ENCODE measurements at regions of chr9 and their contacts with region 1.

Region 1: GRCh38 chr9:32968101-32969011 is 33.1 kb downstream of the APTX start:
- DNase-seq: peak; percentile 10
- ATAC-seq: peak; percentile 64; the same call in 1 of the 2 replicates
- H3K4me3 ChIP-seq: no peak overlapping the region
- H3K27ac ChIP-seq: no peak overlapping the region
- H3K4me1 ChIP-seq: no peaks in the 10 kb centered on the region
- H3K27me3 ChIP-seq: no peaks in the 10 kb centered on the region
- CTCF ChIP-seq: peak; percentile 81; the same call in 1 of the 2 replicates

Region 2: DNA sequence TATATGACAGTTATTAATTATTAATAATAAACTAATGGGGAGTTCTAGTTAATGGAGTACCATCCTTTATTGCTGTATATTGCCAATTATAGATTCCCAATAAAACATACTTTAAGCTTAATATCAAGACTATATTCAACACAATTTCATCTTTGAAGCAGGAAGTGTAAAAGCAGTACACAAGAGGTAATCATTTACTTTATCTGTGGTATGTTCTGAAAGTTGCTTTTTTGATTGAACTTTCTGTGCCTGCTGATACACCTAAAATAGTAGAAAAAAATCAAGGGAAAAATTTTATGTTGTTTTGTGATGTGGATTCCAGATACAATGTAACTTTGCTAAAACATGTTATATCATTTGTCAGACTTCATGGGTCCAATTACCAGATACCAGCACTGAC is 525.9 kb before region 1 on chr9:
- CTCF ChIA-PET with region 1: no interaction called
- POLR2A ChIA-PET with region 1: no interaction called
- in situ Hi-C with region 1: no loop called
- intact Hi-C with region 1: no loop called
- DNase-seq: no peak
- ATAC-seq: no peak
- H3K4me3 ChIP-seq: no peak overlapping the region
- H3K27ac ChIP-seq: no peak overlapping the region
- H3K4me1 ChIP-seq: no peaks in the 10 kb centered on the region
- H3K27me3 ChIP-seq: no peaks in the 10 kb centered on the region
- CTCF ChIP-seq: no peak

Region 3: GRCh38 chr9:32550562-32551433 is 417.6 kb before region 1 on chr9:
- CTCF ChIA-PET with region 1: no interaction called
- POLR2A ChIA-PET with region 1: no interaction called
- in situ Hi-C with region 1: loop called (anchors 25 kb)
- intact Hi-C with region 1: no loop called
- DNase-seq: peak; percentile 52
- ATAC-seq: peak; percentile 82
- H3K4me3 ChIP-seq: peak overlapping the region; percentile 54 to 78
- H3K27ac ChIP-seq: peak overlapping the region; percentile 84
- H3K4me1 ChIP-seq: peaks cover 16% of the 10 kb centered on the region
- H3K27me3 ChIP-seq: no peaks in the 10 kb centered on the region
- CTCF ChIP-seq: no peak

Region 4: DNA sequence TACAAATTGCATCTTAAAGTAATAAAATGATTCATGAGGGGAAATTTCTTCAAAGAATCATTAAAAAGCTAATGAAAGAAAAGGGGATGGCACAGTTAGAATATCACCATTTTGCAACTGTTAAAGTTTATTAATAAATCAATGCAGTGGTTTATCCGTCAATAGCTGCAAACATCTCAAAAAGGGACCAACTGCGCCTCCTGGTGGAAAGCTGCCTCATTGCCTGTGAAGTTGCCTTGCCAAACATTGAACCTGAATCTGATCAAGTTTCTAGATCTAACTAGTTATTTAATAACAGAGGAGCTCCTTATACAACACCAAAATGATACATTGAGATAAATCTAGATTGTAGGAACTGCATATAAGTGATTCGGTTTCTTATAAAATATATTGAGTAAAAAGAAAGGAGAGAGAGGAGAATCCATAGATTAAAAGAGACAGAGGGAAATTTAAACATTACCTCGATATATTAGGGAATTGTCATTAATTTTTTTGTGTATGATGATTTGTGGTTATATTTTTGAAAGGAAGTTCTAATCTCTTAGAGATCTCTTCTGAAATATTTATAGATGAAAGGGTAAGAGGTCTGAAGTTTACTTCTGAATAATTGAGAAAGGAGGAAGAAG is 388.5 kb before region 1 on chr9:
- CTCF ChIA-PET with region 1: interaction called, 6 read pairs
- POLR2A ChIA-PET with region 1: no interaction called
- in situ Hi-C with region 1: no loop called
- intact Hi-C with region 1: loop called (anchors 1 kb)
- DNase-seq: no peak
- ATAC-seq: peak; percentile 59; the same call in 1 of the 2 replicates
- H3K4me3 ChIP-seq: no peak overlapping the region
- H3K27ac ChIP-seq: no peak overlapping the region
- H3K4me1 ChIP-seq: no peaks in the 10 kb centered on the region
- H3K27me3 ChIP-seq: peaks cover 2% of the 10 kb centered on the region; the same call in 1 of the 2 replicates
- CTCF ChIP-seq: peak; percentile 93

Region 5: DNA sequence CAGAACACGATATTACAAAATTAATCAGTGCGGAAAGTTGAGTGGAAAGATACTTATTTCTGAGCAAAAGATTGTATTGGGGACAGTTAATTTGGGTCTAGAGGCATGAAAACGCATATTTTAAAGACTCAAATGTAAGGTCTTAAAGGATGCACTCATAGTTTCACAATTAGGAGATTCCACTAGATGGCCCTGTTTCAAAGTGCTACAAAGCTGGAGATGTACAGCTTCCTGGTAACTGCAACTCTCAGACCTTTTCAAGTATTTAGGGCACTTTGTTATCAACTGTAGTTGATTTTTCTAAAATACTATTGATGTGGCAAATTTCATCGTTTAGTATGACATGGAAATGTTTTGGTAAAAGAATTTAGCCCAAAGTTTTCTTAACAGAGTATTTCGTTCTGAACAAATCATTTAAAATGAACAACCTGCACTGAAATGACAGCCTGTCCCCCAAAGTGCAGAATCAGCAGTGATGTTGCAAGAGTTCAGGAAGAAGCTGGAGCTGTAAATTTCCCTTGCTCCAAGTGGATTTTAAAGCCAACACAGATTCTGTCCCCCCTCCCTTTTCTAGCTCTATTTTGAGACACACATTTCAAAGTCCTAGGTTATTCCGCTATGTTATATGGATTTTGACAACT is 379.2 kb before region 1 on chr9:
- CTCF ChIA-PET with region 1: interaction called, 27 read pairs
- POLR2A ChIA-PET with region 1: no interaction called
- in situ Hi-C with region 1: no loop called
- intact Hi-C with region 1: loop called (anchors 2 kb)
- DNase-seq: no peak
- ATAC-seq: peak; percentile 89
- H3K4me3 ChIP-seq: no peak overlapping the region
- H3K27ac ChIP-seq: no peak overlapping the region
- H3K4me1 ChIP-seq: no peaks in the 10 kb centered on the region
- H3K27me3 ChIP-seq: peaks cover 3% of the 10 kb centered on the region; the same call in 1 of the 2 replicates
- CTCF ChIP-seq: peak; percentile 68; the same call in 1 of the 2 replicates

Region 6: DNA sequence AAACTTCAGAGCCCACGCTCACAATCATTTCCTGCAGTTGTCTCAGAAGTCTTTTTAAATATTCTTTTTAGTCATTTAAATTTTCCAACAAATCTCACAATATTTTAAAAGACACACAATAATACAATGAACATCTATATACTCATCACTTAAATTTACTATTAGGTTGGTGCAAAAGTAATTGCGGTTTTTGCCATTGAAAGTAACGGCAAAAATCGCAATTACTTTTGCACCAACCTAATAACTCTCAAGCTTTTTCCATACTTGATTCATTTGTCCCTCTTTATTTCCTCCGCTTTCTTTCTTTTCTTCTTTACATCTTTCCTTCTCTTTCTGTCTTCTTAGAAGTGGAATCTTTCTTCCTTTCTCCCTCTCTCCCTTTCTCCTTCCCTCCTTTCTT is 204.2 kb before region 1 on chr9:
- CTCF ChIA-PET with region 1: no interaction called
- POLR2A ChIA-PET with region 1: no interaction called
- in situ Hi-C with region 1: no loop called
- intact Hi-C with region 1: loop called (anchors 10 kb)
- DNase-seq: no peak
- ATAC-seq: no peak
- H3K4me3 ChIP-seq: no peak overlapping the region
- H3K27ac ChIP-seq: no peak overlapping the region
- H3K4me1 ChIP-seq: no peaks in the 10 kb centered on the region
- H3K27me3 ChIP-seq: 0 out of 2 replicates have a peak, but pooled peaks cover 2% of the 10 kb centered on the region
- CTCF ChIP-seq: no peak

Region 7: DNA sequence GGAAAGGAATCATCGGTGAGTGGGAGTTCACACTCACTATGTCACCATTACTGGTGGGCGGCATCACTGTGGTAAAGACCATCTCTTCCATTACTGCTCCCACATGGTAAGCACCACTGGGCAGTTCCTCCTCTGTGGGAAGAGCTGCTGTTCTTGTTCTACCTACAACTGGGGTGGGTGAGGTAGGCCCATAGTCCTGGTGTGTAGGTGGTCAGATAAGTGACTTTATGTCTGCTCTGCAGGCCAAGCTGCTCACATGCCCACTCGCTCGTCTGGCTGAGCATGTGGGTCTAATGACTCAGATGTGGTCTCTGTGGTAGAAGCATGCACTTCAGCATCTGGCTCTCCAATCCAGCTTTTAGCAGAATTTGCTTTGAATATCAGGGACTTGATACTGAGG is 102.1 kb before region 1 on chr9:
- CTCF ChIA-PET with region 1: no interaction called
- POLR2A ChIA-PET with region 1: no interaction called
- in situ Hi-C with region 1: no loop called
- intact Hi-C with region 1: no loop called
- DNase-seq: no peak
- ATAC-seq: no peak
- H3K4me3 ChIP-seq: no peak overlapping the region
- H3K27ac ChIP-seq: no peak overlapping the region
- H3K4me1 ChIP-seq: no peaks in the 10 kb centered on the region
- H3K27me3 ChIP-seq: peaks cover 3% of the 10 kb centered on the region
- CTCF ChIP-seq: no peak

Region 8: DNA sequence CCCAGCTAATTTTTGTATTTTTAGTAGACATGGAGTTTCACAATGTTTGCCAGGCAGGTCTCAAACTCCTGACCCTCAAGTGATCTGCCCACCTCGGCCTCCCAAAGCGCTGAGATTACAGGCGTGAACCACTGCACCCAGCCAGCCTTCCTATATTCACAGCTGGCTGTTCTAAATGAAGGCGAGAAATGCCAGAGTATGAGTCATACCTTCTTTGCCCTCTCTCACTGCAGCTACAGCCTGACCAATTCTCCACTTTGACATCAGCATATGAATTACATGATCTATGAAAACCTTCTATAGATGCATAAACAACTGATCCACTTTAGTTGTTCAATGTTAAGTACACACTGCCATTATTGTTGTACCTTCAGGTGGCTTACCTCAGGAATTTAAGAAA is 18.6 kb after region 1 on chr9:
- CTCF ChIA-PET with region 1: no interaction called
- POLR2A ChIA-PET with region 1: interaction called, 11 read pairs
- in situ Hi-C with region 1: no loop called
- intact Hi-C with region 1: no loop called
- DNase-seq: no peak
- ATAC-seq: no peak
- H3K4me3 ChIP-seq: no peak overlapping the region
- H3K27ac ChIP-seq: no peak overlapping the region
- H3K4me1 ChIP-seq: no peaks in the 10 kb centered on the region
- H3K27me3 ChIP-seq: no peaks in the 10 kb centered on the region
- CTCF ChIP-seq: no peak

Measured in Panc1 (cell line).